GM18951 (cell line): ENCODE measurements at regions of chr4 and their contacts with region 1.

Region 1: GRCh38 chr4:114378306-114378903 is 220.2 kb upstream of the UGT8 start:
- POLR2A ChIP-seq: no peak

Region 2: DNA sequence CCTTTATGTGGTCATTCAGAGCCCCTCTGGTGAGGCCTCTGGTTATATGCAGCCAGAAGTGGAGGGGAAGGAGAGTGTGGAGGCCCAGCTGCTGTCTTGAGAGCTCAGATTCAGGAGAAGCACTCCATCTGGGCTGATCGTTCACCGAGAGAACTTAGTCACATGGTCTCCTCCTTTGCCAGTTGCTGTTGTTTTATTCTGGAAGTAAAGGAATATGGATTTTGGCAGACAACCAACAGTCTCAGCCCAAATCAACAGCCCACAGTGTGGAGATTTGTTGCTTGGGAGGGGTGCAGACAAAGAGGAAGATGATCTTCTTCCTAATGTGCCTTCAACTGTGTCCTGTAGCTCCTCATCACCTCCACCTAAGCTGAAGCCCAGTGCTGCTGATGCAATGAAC is 973.6 kb before region 1 on chr4:
- in situ Hi-C with region 1: loop called (anchors 10 kb)
- POLR2A ChIP-seq: no peak

Region 3: DNA sequence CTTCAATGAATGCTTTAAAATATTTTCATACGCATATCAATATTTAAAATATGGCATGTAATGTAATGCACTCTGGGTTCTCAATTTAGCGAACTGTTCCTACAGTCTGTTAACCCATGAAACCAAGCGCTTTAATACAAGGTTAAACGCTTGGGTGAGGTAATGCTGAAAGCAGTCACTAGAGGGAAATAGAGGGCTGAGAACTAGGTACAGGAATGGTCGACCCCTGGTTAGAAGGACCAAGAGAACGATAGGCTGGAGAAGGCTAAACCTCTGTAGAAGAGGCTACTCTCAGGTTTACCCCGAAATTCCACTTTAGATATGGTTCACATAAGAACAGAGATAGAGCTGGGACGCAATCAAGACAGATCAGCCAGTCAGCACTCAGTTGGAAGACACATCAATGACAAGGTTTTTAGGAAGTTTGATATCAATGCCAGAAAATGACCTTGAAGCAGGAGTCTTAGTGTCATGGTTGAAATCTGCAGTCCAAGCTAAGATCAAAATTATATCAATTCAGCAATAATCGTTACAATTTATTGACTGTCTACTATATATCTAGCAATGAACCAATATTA is 425.9 kb before region 1 on chr4:
- in situ Hi-C with region 1: loop called (anchors 10 kb)
- POLR2A ChIP-seq: no peak